ENCODE measurements at regions of chr11 and their contacts with region 1.

Region 1: GRCh38 chr11:66744485-66745340 is 15.7 kb upstream of the SPTBN2 start:
- DNase-seq: peak; percentile 86 to 94
- ATAC-seq: peak; percentile 93
- H3K4me3 ChIP-seq: peak overlapping the region; percentile 69 to 81
- H3K27ac ChIP-seq: no peak overlapping the region
- H3K4me1 ChIP-seq: no peaks in the 10 kb centered on the region
- H3K27me3 ChIP-seq: no peaks in the 10 kb centered on the region

Region 2: GRCh38 chr11:66787912-66788758 is 43.4 kb after region 1 on chr11:
- intact Hi-C with region 1: loop called in 1 of 2 experiments (anchors 5 kb)
- DNase-seq: no peak
- ATAC-seq: peak; percentile 48
- H3K4me3 ChIP-seq: no peak overlapping the region
- H3K27ac ChIP-seq: peak overlapping the region in 1 of 2 donors; percentile 49
- H3K4me1 ChIP-seq: no peaks in the 10 kb centered on the region
- H3K27me3 ChIP-seq: no peaks in the 10 kb centered on the region

Measured in aorta (tissue), 5 donors.